A549 (cell line): ENCODE measurements at regions of chr9 and their contacts with region 1.

Region 1: GRCh38 chr9:136944519-136945279 is at the starts of genes C8G and FBXW5:
- DNase-seq: peak; percentile 89 to 91
- ATAC-seq: peak; percentile 34 to 47
- H3K4me3 ChIP-seq: peak within 1 kb of the TSS; percentile 78
- H3K27ac ChIP-seq: peak within 1 kb of the TSS; percentile 98 to 99
- H3K4me1 ChIP-seq: peaks cover 36% of the 10 kb centered on the region
- CTCF ChIP-seq: peak; percentile 94
- EP300 ChIP-seq: no peak; a peak in 1 of 5 replicates
- POLR2A ChIP-seq: peak; percentile 60
- RAD21 ChIP-seq: peak; percentile 21 to 40; a peak in 3 of 5 replicates
- polyA plus RNA-seq, gene C8G: 0.41 and 0.45 TPM in 2 replicates
- polyA plus RNA-seq, gene FBXW5: 37.3 and 37.5 TPM in 2 replicates

Region 2: DNA sequence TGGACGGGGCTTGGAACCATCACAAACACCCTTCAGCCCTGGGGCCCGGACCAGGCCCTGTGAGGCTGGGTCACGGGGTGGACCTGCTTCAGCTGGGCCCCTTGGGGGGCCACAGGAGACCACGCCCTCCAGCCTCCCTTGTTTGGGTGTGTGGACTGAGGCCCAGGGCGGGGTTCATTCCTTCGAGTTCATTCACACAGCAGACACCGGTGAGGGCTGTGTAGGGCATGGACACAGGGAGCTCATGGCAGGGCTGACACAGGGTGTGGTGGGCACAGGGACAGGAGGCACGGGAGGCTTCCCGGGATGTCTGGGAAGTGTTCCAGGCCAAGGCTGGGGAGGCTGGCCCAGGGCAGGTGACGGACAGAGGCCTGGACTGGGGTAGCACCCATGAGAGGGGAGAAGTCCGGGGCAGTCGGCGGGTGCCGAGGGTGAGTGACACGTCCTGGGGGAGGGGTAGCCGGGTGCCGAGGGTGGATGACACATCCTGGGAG is 590.1 kb before region 1 on chr9:
- CTCF ChIA-PET with region 1: no interaction called
- POLR2A ChIA-PET with region 1: no interaction called
- DNase-seq: peak; percentile 23 to 52
- ATAC-seq: peak; percentile 12 to 51; a peak in 5 of 6 replicates
- H3K4me3 ChIP-seq: no peak overlapping the region
- H3K27ac ChIP-seq: peak overlapping the region in 1 of 2 experiments; percentile 66; a peak in 3 of 6 replicates
- H3K4me1 ChIP-seq: peaks cover 27% of the 10 kb centered on the region
- CTCF ChIP-seq: no peak
- EP300 ChIP-seq: no peak
- POLR2A ChIP-seq: no peak
- RAD21 ChIP-seq: no peak

Region 3: DNA sequence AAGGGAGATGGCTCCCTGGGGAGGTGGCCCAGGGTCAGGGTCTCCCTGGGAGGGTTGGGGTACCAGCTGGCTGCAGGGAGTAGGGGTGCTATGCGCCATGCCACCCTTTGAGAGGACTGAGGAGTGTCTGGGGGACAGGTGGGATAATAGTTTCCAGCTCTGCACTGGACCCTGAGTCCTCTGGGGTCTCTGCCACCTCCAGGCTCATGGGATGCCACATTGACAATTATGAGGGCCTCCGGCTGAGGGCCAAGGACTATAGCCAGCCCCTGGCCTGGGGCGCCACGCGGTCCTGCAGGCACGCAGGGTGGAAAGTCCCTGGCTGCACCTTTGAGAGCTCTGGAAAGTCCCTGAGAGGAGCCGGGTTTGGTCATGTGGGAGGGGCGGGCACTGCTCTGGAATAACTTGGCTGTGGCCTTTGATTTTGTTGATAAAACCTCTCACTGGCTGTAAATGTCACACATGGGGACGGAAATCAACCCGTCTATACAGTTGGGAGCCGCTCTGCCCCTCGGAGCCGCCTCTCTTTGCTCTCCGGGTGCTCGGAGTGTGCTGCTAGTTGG is 42.4 kb before region 1 on chr9:
- CTCF ChIA-PET with region 1: interaction called, 6 read pairs
- POLR2A ChIA-PET with region 1: interaction called, 10 read pairs
- DNase-seq: peak; percentile 94 to 97
- ATAC-seq: peak; percentile 65 to 79
- H3K4me3 ChIP-seq: peak overlapping the region; percentile 21
- H3K27ac ChIP-seq: peak overlapping the region; percentile 96
- H3K4me1 ChIP-seq: peaks cover 73% of the 10 kb centered on the region
- CTCF ChIP-seq: no peak
- EP300 ChIP-seq: peak; percentile 47 to 80; a peak in 3 of 5 replicates
- POLR2A ChIP-seq: peak; percentile 9; the same call in 1 of the 2 replicates
- RAD21 ChIP-seq: 0 out of 5 replicates have a peak, but pooled peaks of 1 of the 2 experiments have one; percentile 9

Region 4: GRCh38 chr9:136961279-136962065 is 16.8 kb after region 1 on chr9:
- CTCF ChIA-PET with region 1: interaction called, 11 read pairs
- POLR2A ChIA-PET with region 1: interaction called, 3 read pairs
- DNase-seq: no peak
- ATAC-seq: no peak
- H3K4me3 ChIP-seq: no peak overlapping the region
- H3K27ac ChIP-seq: no peak overlapping the region
- H3K4me1 ChIP-seq: peaks cover 12% of the 10 kb centered on the region; the same call in 2 of the 3 replicates
- CTCF ChIP-seq: no peak
- EP300 ChIP-seq: no peak
- POLR2A ChIP-seq: no peak
- RAD21 ChIP-seq: no peak

Region 5: DNA sequence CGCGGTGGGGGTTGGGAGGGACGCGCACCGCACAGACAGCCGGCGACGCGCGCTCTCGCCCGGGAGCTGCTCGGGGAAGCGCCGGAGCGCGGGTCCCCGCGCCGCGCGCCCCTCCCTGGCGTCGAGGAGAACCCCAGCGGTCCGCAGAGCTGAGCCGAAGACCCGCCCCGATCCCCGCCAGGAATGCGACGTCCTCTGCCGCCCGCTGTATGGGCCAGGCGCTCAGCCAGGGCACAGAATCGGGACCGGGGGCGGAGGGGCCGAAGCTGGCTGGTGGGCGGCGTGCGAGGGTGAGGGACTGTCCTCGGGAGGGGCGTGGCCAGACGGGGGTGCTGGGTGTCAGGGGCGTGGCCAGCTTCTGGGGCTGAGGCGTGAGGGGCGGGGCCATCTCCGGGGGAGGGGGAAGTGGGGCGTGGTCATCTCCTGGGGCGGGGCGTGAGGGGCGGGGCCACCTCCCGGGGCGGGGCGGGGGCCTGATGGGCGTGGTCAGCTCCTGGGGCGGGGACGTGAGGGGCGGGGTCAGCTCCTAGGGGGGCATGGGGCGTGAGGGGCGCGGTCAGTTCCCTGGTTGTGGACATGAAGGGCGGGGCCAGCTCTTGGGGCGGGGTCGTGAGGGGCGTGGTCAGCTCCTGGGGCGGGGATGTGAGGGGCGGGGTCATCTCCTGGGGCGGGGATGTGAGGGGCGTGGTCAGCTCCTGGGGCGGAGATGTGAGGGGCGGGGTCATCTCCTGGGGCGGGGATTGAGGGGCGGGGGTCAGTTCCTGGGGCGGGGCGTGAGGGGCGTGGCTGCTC is 33.6 kb after region 1 on chr9:
- CTCF ChIA-PET with region 1: interaction called, 64 read pairs
- POLR2A ChIA-PET with region 1: interaction called, 3 read pairs
- DNase-seq: peak; percentile 89 to 95
- ATAC-seq: peak; percentile 4 to 56
- H3K4me3 ChIP-seq: peak overlapping the region; percentile 45
- H3K27ac ChIP-seq: peak overlapping the region; percentile 52 to 94
- H3K4me1 ChIP-seq: peaks cover 14% of the 10 kb centered on the region
- CTCF ChIP-seq: no peak
- EP300 ChIP-seq: no peak
- POLR2A ChIP-seq: no peak
- RAD21 ChIP-seq: no peak

Region 6: DNA sequence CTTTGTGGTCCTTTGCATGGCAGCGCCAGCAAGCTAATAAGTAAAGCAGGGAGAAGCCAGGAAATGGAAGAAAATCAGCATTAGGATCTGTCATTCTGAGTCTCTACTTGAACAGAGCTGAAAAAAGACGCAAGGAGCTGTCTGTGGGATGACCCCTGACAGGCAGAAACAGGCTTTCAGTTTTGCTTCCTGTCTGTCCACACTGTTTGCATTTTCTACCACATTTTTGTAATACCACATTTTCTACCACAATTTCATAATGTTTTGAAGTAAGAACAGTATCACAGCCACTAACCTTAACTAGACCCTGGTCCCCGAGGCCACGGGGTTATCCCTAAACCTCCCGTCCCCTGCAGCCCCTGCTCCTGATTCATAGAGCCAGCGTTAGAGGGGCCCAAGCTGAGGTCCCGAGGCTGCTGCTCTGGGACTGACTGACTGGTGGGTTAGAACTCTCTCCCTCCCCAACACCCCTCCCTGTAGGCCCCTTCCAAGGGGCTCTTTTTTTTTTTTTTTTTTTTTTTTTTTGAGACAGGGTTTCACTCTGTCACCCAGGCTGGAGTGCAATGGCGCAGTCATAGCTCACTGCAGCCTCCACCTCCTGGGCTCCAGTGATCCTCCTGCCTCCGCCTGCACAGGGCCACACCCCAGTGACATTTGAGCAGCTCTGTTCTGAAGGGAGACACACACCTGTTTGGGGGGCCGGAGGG is 55.6 kb after region 1 on chr9:
- CTCF ChIA-PET with region 1: interaction called, 16 read pairs
- POLR2A ChIA-PET with region 1: interaction called, 6 read pairs
- DNase-seq: no peak
- ATAC-seq: no peak
- H3K4me3 ChIP-seq: no peak overlapping the region
- H3K27ac ChIP-seq: 0 out of 6 replicates have a peak overlapping the region, but pooled peaks of 1 of the 2 experiments have one; percentile 15
- H3K4me1 ChIP-seq: peaks cover 41% of the 10 kb centered on the region
- CTCF ChIP-seq: no peak
- EP300 ChIP-seq: no peak
- POLR2A ChIP-seq: no peak
- RAD21 ChIP-seq: no peak

Region 7: DNA sequence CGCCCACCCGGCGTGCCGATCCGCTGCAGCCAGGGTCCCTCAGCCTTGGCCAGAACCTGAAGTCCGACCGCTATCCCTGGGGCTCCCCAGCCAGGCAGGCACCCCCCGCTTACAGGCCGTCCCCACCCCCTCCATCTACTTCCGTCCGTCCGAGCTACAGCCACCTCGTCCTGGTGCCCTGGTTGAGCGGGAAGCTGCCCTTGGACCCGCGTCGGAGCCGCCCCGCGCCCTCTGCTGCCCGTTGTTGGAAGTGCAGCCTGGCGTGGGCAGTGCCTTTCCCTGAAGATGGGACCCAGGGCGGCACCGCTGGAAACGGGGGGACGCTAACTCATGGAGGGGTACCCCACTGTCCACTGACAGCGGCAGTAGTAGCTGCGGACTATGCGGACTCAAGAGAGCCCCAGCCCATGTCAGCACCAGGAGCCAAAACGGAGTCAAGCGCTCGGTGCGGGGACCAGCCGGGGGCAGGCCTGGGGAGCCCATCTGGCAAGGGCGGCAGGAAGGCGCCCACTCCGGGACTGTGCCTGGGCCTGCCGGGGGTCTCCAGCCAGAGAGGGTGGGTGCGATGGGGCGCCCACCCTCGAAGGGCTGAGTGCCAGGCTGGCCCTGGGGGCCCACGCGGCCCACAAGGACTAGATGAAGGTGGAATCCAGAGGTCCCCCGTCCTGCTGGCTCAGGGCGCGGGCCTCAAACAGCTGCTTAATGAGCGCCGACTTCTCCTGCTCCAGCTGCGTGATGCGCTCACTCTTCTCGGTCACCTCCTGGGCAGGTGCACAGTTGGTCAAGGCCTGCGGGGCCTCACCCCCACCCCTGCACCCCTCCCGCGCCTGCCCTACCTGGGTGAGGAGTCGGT is 119.6 kb after region 1 on chr9:
- CTCF ChIA-PET with region 1: interaction called, 22 read pairs
- POLR2A ChIA-PET with region 1: no interaction called
- DNase-seq: peak in 1 of 2 experiments; percentile 64
- ATAC-seq: peak; percentile 67 to 78
- H3K4me3 ChIP-seq: no peak overlapping the region
- H3K27ac ChIP-seq: peak overlapping the region in 1 of 2 experiments; percentile 64; a peak in 4 of 6 replicates
- H3K4me1 ChIP-seq: peaks cover 15% of the 10 kb centered on the region
- CTCF ChIP-seq: peak; percentile 78
- EP300 ChIP-seq: no peak
- POLR2A ChIP-seq: no peak
- RAD21 ChIP-seq: peak; percentile 60 to 65